Activated naive CD4-positive, alpha-beta T cell treated with anti-CD3 and anti-CD28 coated beads for 36 hours (primary cell): ENCODE measurements at regions of chr12 and their contacts with region 1.

Region 1: GRCh38 chr12:54958048-54958658 is 26.4 kb downstream of the TESPA1 start:
- DNase-seq: peak; percentile 75
- H3K4me3 Mint-ChIP-seq: no peak overlapping the region
- H3K27ac Mint-ChIP-seq: peak overlapping the region; percentile 76
- H3K4me1 Mint-ChIP-seq: peaks cover 88% of the 10 kb centered on the region
- H3K27me3 Mint-ChIP-seq: no peaks in the 10 kb centered on the region

Region 2: DNA sequence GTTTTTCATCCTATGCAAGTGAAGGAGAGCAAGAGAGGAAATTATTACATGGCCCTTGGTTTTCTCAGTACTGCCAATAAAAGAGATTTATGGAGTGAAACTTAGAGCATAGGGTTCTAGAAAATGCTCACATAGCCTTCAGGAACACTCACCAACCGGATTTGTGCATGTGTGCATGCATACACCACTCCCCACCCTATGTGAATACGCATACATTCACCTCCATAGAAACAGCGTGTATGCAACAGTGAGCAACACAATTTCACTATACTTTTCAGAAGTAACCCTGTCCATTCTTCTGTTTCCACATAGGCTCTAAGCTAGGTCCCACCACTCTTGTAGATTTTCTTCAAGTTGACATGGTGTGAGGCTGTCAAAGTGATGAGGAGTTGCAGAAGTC is 1051.0 kb before region 1 on chr12:
- CTCF ChIA-PET with region 1: no interaction called
- intact Hi-C with region 1: no loop called
- DNase-seq: no peak
- H3K4me3 Mint-ChIP-seq: no peak overlapping the region
- H3K27ac Mint-ChIP-seq: no peak overlapping the region
- H3K4me1 Mint-ChIP-seq: no peaks in the 10 kb centered on the region
- H3K27me3 Mint-ChIP-seq: peaks cover 24% of the 10 kb centered on the region

Region 3: GRCh38 chr12:54701940-54702592 is 256.1 kb before region 1 on chr12:
- CTCF ChIA-PET with region 1: interaction called, 5 read pairs
- intact Hi-C with region 1: loop called (anchors 1 kb)
- DNase-seq: no peak
- H3K4me3 Mint-ChIP-seq: no peak overlapping the region
- H3K27ac Mint-ChIP-seq: no peak overlapping the region
- H3K4me1 Mint-ChIP-seq: no peaks in the 10 kb centered on the region
- H3K27me3 Mint-ChIP-seq: no peaks in the 10 kb centered on the region

Region 4: DNA sequence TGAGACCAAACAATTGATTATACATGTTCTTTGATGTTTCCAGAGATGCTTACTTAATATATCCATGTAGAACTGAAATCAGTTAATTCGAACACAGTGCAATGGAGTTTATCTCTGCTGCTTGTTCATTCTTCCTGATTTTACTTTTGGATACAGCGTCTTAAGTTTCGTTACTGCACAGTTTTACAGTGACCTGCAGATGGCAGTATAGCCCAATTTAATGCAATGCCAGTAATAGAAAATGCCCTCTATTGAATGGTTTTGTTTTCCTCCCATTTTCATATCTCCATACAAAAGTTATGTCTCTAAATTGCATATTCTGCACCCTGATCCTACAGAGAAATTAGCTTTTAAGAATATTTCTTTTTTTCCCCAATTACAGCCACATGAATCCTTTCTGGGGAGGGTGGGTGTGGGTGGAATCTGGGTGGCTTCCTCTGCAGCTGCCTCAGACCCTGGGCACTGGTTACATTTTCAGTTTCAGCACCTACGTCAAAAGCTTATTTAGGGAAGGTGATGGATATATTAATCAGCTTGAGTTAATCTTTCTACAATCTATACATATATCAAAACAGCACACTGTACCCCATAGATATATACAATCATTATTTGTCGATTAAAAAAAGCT is 208.8 kb before region 1 on chr12:
- CTCF ChIA-PET with region 1: interaction called, 24 read pairs
- intact Hi-C with region 1: loop called (anchors 1 kb)
- DNase-seq: peak; percentile 58
- H3K4me3 Mint-ChIP-seq: no peak overlapping the region
- H3K27ac Mint-ChIP-seq: no peak overlapping the region
- H3K4me1 Mint-ChIP-seq: peaks cover 25% of the 10 kb centered on the region
- H3K27me3 Mint-ChIP-seq: no peaks in the 10 kb centered on the region

Region 5: DNA sequence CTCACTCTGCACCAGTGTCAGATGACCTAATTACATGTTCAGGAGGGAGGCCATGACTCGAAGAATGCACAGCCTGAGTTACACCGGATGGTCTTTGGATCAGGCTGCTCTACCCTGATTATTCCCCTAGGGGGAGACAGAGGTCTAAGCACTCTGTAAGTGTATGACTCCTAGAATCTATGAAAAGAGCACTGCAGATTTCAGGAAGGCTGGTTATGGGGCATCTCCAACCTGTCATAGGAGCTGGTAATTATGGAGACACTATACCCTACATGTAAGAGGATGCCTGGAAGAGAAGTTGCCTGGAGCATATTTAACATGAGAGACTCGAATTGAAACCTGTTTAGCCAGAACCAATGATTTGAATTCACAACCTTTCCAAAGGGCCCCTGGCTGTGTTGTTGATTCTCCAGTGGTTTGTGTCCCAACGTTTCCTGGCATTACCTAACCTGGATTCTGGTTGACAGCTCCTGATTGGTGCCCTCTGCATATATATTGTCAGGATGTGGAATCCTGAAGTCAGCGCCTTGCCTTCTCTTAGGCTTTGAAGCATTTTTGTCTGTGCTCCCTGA is 104.1 kb before region 1 on chr12 and contains the start of gene MUCL1:
- CTCF ChIA-PET with region 1: interaction called, 121 read pairs
- intact Hi-C with region 1: loop called (anchors 1 kb)
- DNase-seq: peak; percentile 89
- H3K4me3 Mint-ChIP-seq: no peak within 1 kb of the TSS
- H3K27ac Mint-ChIP-seq: no peak within 1 kb of the TSS
- H3K4me1 Mint-ChIP-seq: peaks cover 16% of the 10 kb centered on the region
- H3K27me3 Mint-ChIP-seq: no peaks in the 10 kb centered on the region
- total RNA-seq, gene MUCL1: not detected

Region 6: GRCh38 chr12:54977155-54977554 is 19.0 kb after region 1 on chr12:
- CTCF ChIA-PET with region 1: interaction called, 11 read pairs
- intact Hi-C with region 1: no loop called
- DNase-seq: no peak
- H3K4me3 Mint-ChIP-seq: peak overlapping the region; percentile 61
- H3K27ac Mint-ChIP-seq: peak overlapping the region; percentile 67
- H3K4me1 Mint-ChIP-seq: peaks cover 87% of the 10 kb centered on the region
- H3K27me3 Mint-ChIP-seq: no peaks in the 10 kb centered on the region

Region 7: DNA sequence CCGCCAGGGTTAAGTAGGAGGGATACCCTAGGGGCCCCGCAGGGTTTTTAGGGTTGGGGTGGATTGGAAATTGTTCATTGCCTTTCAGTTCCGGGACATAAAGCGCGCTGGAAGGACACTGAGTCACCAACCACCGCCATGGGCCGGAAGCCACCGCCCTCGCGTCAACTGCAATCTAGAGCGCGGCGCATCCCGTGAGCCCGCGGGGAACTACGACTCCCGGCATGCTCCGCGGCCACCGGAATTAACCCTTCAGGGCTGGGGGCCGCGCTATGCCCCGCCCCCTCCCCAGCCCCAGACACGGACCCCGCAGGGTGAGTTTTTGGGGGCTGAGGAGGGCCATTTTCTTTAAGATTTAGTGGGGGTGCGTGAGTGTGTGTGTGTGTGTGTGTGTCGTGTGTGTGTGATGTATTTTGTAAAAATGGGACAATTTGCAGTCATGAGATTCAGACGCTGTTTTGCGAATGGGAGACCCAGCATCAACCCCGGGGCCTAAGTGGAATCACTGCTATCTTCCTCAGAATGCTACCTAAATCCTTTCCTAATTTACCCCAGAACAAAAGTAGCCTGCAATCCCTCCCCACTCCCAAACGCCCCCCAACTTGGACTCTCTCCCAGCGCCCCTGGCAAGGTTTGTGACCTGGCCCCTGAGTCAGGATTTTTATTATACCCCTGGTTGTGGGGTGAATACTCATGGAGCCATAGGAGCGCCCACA is 1194.3 kb after region 1 on chr12 and contains the start of gene MYL6B:
- CTCF ChIA-PET with region 1: no interaction called
- intact Hi-C with region 1: no loop called
- DNase-seq: peak; percentile 98
- H3K4me3 Mint-ChIP-seq: peak within 1 kb of the TSS; percentile 84
- H3K27ac Mint-ChIP-seq: peak within 1 kb of the TSS; percentile 98
- H3K4me1 Mint-ChIP-seq: peaks cover 37% of the 10 kb centered on the region
- H3K27me3 Mint-ChIP-seq: no peaks in the 10 kb centered on the region
- total RNA-seq, gene MYL6B: 49.2 to 57.5 TPM